Activated T-helper 1 cell treated with anti-CD3 and anti-CD28 coated beads, Interleukin-12 subunit alpha, Interleukin-12 subunit beta, Interleukin-2, Interleukin-4 antibody, amounts not matched to agents 30 ng/mL and 10 ng/mL and 1 ng/mL, durations not matched to agents 14 hours and 24 hours and 36 hours (primary cell): ENCODE measurements at regions of chr21 and their contacts with region 1.

Region 1: GRCh38 chr21:44920694-44921604 is at the start of gene ITGB2:
- DNase-seq: peak; percentile 56
- H3K4me3 Mint-ChIP-seq: peak within 1 kb of the TSS; percentile 99
- H3K27ac Mint-ChIP-seq: peak within 1 kb of the TSS; percentile 93
- H3K4me1 Mint-ChIP-seq: peaks cover 84% of the 10 kb centered on the region
- H3K27me3 Mint-ChIP-seq: no peaks in the 10 kb centered on the region
- total RNA-seq, gene ITGB2: 292 and 294 TPM in 2 replicates

Region 2: GRCh38 chr21:44792702-44793591 is 128.0 kb before region 1 on chr21:
- intact Hi-C with region 1: no loop called
- DNase-seq: peak; percentile 45
- H3K4me3 Mint-ChIP-seq: no peak overlapping the region
- H3K27ac Mint-ChIP-seq: peak overlapping the region; percentile 10
- H3K4me1 Mint-ChIP-seq: peaks cover 41% of the 10 kb centered on the region
- H3K27me3 Mint-ChIP-seq: no peaks in the 10 kb centered on the region

Region 3: DNA sequence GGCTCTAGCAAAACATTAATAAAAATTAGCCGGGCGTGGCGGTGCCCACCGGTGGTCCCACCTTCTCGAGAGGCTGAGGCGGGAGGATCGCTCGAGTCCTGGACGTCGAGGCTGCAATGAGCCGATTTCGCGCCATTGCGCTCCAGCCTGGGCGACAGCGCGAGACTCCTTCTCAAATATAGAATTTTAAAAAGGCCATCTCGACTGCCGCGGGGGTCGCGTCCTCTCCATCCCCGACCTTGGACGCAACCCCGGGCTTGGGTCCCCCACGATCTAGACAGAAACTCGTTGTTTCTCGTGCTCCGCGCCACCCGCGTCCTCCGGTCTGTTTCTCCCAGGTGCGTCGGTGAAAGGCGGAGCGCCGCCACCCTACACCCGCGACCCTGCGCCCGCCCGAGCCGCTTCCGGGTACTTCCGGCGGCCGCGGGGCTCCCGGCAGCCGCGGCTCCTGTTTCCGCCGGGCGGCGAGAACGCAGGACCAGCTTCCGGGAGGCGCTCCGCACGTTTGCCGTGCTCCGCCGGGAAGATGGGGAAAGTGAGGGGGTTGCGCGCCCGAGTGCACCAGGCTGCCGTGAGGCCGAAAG is 18.7 kb after region 1 on chr21 and contains the start of gene SLX9:
- intact Hi-C with region 1: loop called (anchors 2 kb)
- DNase-seq: peak; percentile 78
- H3K4me3 Mint-ChIP-seq: peak within 1 kb of the TSS; percentile 91
- H3K27ac Mint-ChIP-seq: peak within 1 kb of the TSS; percentile 77
- H3K4me1 Mint-ChIP-seq: peaks cover 35% of the 10 kb centered on the region
- H3K27me3 Mint-ChIP-seq: no peaks in the 10 kb centered on the region
- total RNA-seq, gene SLX9: 83.4 and 84.7 TPM in 2 replicates